ENCODE measurements at regions of chr4 and their contacts with region 1.

Region 1: GRCh38 chr4:103008875-103009729 is 10.4 kb downstream of the SLC9B1 start:
- DNase-seq: no peak
- H3K4me3 ChIP-seq: no peak overlapping the region
- H3K27ac ChIP-seq: no peak overlapping the region
- H3K4me1 ChIP-seq: peaks cover 0 to 4% of the 10 kb centered on the region in 2 donors
- H3K27me3 ChIP-seq: no peaks in the 10 kb centered on the region
- CTCF ChIP-seq: peak; percentile 61 to 73 (median 67)
- POLR2A ChIP-seq: no peak

Region 2: GRCh38 chr4:102449751-102450352 is 559.2 kb before region 1 on chr4:
- intact Hi-C with region 1: loop called (anchors 5 kb)
- DNase-seq: no peak
- H3K4me3 ChIP-seq: no peak overlapping the region
- H3K27ac ChIP-seq: no peak overlapping the region
- H3K4me1 ChIP-seq: no peaks in the 10 kb centered on the region
- H3K27me3 ChIP-seq: no peaks in the 10 kb centered on the region
- CTCF ChIP-seq: peak; percentile 16 to 67 (median 62)
- POLR2A ChIP-seq: no peak

Region 3: GRCh38 chr4:102759831-102760644 is 249.1 kb before region 1 on chr4:
- intact Hi-C with region 1: loop called (anchors 5 kb)
- DNase-seq: no peak
- H3K4me3 ChIP-seq: peak overlapping the region; percentile 74 to 88 (median 83)
- H3K27ac ChIP-seq: peak overlapping the region; percentile 73 to 85
- H3K4me1 ChIP-seq: no peaks in the 10 kb centered on the region
- H3K27me3 ChIP-seq: no peaks in the 10 kb centered on the region
- CTCF ChIP-seq: no peak
- POLR2A ChIP-seq: no peak